Activated CD8-positive, alpha-beta T cell treated with anti-CD3 and anti-CD28 coated beads, Interleukin-2, amount 10 ng/mL, durations not matched to agents 7 days and 5 days (primary cell): ENCODE measurements at regions of chr1 and their contacts with region 1.

Region 1: DNA sequence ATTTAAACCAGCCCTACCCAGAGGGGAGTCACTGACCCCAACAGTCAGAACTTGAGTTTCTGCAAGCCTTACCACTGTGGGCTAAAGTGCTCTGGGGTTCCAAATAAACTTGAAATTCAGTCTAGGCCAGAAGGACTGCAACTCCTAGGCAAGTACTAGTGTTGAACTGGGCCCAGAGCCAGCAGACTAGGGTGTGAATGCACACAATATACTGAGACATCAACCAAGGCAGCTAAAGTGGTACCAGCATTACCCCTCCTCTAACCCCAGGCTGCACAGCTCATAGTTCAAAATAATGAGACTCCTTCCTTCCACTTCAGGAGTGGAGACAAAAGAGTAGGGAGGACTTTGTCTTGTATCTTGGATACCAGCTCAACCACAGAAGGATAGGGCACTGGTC is 18.9 kb upstream of the IL20 start:
- DNase-seq: no peak
- ATAC-seq: no peak
- H3K4me3 Mint-ChIP-seq: no peak overlapping the region
- H3K27ac Mint-ChIP-seq: no peak overlapping the region
- H3K4me1 Mint-ChIP-seq: no peaks in the 10 kb centered on the region
- H3K27me3 Mint-ChIP-seq: peaks cover 18% of the 10 kb centered on the region

Region 2: DNA sequence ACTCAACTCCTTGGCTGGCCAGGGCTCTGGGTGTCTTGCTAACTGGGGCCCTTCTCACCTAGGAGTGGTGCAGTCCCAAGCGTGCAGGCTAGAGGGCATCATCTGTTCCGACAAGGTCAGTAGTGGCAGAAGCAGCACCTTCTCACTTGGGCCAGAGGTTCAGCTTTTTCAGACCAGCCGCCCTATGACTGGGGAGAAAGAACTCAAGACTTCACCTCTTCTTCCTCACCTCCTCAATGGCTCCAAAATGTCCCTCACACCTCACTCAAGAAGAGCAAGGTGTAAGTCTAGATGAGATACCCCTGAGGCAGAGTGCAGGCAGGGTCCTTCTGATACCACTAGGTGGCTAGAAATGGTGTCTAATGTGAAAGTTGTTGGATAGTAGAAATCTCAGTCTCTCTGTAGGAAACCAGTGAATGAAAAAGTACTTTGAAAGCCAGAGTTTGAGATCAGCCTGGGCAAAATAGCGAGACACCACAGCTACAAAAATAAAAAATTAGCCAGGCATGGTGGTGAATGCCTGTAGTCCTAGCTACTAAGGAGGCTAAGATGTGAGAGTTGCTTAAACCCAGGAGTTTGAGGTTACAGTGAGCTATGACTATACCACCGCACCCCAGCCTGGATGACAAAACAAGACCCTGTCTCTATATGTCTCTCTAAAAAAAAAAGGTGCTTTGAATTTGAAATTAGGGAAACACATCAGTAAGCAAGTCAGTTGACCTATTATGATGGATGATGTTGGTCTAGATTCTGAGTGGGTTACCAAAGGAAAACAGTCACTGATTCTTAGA is 10.4 kb after region 1 on chr1:
- CTCF ChIA-PET with region 1: interaction called, 10 read pairs
- POLR2A ChIA-PET with region 1: interaction called, 3 read pairs
- DNase-seq: no peak
- ATAC-seq: peak; percentile 53
- H3K4me3 Mint-ChIP-seq: no peak overlapping the region
- H3K27ac Mint-ChIP-seq: no peak overlapping the region
- H3K4me1 Mint-ChIP-seq: peaks cover 15% of the 10 kb centered on the region
- H3K27me3 Mint-ChIP-seq: peaks cover 25% of the 10 kb centered on the region